Heart left ventricle (tissue), 16 donors: ENCODE measurements at regions of chr14 and their contacts with region 1.

Region 1: GRCh38 chr14:29282169-29282568 is 515.6 kb downstream of the FOXG1 start:
- DNase-seq: no peak
- ATAC-seq: no peak
- H3K4me3 ChIP-seq: no peak overlapping the region
- H3K27ac ChIP-seq: no peak overlapping the region
- H3K4me1 ChIP-seq: no peaks in the 10 kb centered on the region
- H3K27me3 ChIP-seq: no peaks in the 10 kb centered on the region
- CTCF ChIP-seq: no peak
- POLR2A ChIP-seq: no peak

Region 2: GRCh38 chr14:29242755-29243754 is 39.1 kb before region 1 on chr14:
- intact Hi-C with region 1: loop called in 1 of 10 experiments (anchors 2 kb)
- DNase-seq: no peak
- ATAC-seq: peak in 1 of 4 donors; percentile 52
- H3K4me3 ChIP-seq: no peak overlapping the region
- H3K27ac ChIP-seq: no peak overlapping the region
- H3K4me1 ChIP-seq: no peaks in the 10 kb centered on the region
- H3K27me3 ChIP-seq: no peaks in the 10 kb centered on the region
- CTCF ChIP-seq: no peak
- POLR2A ChIP-seq: no peak

Region 3: GRCh38 chr14:29380826-29381225 is 98.7 kb after region 1 on chr14:
- intact Hi-C with region 1: loop called in 1 of 10 experiments (anchors 10 kb)
- DNase-seq: no peak
- ATAC-seq: no peak
- H3K4me3 ChIP-seq: no peak overlapping the region
- H3K27ac ChIP-seq: no peak overlapping the region
- H3K4me1 ChIP-seq: no peaks in the 10 kb centered on the region
- H3K27me3 ChIP-seq: no peaks in the 10 kb centered on the region
- CTCF ChIP-seq: no peak
- POLR2A ChIP-seq: no peak